Gastrocnemius medialis (tissue), 4 donors: ENCODE measurements at regions of chr19 and their contacts with region 1.

Region 1: DNA sequence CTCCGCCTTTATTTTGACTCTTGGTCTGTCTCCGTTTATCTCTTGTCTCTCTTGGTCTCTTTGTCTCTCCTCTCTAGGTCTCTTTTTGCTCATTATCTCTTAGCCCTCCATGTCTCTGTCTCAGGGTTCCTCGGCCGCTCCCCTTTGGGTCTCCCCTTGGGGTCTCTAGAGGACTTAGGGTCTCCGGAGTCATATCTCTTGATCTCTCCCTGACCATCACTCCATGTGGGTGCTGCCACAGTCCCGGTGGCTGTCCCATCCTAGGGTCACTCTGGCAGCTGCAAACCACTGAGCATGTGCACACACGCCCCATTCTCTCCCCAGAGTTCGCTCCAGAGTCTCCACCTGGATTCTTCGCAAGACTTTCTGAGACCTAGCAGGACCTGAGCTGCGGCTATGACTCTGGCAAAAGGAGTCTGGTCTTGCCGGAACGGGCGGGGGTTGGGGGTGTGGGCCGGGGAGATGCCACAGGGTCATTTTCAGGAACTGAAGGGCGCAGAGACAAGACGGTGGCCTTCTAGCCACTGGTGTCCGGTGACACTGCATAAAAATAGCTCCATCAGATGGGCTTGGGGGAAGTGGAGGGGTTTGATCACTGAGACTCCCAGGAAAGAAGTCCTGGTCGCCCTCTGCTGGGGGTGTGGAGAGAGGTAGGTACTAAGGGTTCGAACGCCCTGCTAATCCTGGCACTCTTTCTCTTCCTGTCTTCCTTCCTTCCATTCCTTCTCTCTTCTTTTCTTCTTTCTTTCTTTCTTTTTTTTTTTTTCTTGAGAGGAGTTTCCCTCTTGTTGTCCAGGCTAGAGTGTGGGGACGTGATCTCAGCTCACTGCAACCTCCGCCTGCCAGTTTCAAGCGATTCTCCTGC is 1.2 kb upstream of the KCNA7 start:
- DNase-seq: peak; percentile 47 to 86
- ATAC-seq: peak; percentile 72 to 80
- H3K4me3 ChIP-seq: peak overlapping the region; percentile 14 to 52 (median 48)
- H3K27ac ChIP-seq: peak overlapping the region; percentile 85 to 95 (median 92)
- H3K4me1 ChIP-seq: peaks cover 14 to 24% of the 10 kb centered on the region in 2 donors
- H3K27me3 ChIP-seq: no peaks in the 10 kb centered on the region
- CTCF ChIP-seq: peak; percentile 27 to 60 (median 55)
- POLR2A ChIP-seq: peak; percentile 46 to 49

Region 2: GRCh38 chr19:49056010-49056901 is 17.5 kb before region 1 on chr19:
- in situ Hi-C with region 1: no loop called
- intact Hi-C with region 1: loop called (anchors 1 kb)
- DNase-seq: peak in 1 of 2 donors; percentile 43
- ATAC-seq: peak; percentile 66 to 74
- H3K4me3 ChIP-seq: peak overlapping the region; percentile 49 to 77 (median 68)
- H3K27ac ChIP-seq: peak overlapping the region; percentile 64 to 74 (median 67)
- H3K4me1 ChIP-seq: peaks cover 6 to 23% of the 10 kb centered on the region in 2 donors
- H3K27me3 ChIP-seq: no peaks in the 10 kb centered on the region
- CTCF ChIP-seq: peak; percentile 13 to 70 (median 65)
- POLR2A ChIP-seq: peak in 1 of 2 donors; percentile 33

Region 3: GRCh38 chr19:49085020-49085867 is 11.5 kb after region 1 on chr19 and contains the start of gene SNRNP70:
- in situ Hi-C with region 1: no loop called
- intact Hi-C with region 1: loop called (anchors 1 kb)
- DNase-seq: peak; percentile 99
- ATAC-seq: peak; percentile 90 to 94
- H3K4me3 ChIP-seq: peak within 1 kb of the TSS; percentile 88 to 99 (median 92)
- H3K27ac ChIP-seq: peak within 1 kb of the TSS; percentile 90 to 98 (median 92)
- H3K4me1 ChIP-seq: peaks cover 18 to 26% of the 10 kb centered on the region in 2 donors
- H3K27me3 ChIP-seq: no peaks in the 10 kb centered on the region
- CTCF ChIP-seq: peak in 2 of 5 experiments; percentile 18 to 53
- POLR2A ChIP-seq: peak; percentile 86 to 92
- total RNA-seq, gene SNRNP70: 55.6 to 305 (median 107) TPM

Region 4: DNA sequence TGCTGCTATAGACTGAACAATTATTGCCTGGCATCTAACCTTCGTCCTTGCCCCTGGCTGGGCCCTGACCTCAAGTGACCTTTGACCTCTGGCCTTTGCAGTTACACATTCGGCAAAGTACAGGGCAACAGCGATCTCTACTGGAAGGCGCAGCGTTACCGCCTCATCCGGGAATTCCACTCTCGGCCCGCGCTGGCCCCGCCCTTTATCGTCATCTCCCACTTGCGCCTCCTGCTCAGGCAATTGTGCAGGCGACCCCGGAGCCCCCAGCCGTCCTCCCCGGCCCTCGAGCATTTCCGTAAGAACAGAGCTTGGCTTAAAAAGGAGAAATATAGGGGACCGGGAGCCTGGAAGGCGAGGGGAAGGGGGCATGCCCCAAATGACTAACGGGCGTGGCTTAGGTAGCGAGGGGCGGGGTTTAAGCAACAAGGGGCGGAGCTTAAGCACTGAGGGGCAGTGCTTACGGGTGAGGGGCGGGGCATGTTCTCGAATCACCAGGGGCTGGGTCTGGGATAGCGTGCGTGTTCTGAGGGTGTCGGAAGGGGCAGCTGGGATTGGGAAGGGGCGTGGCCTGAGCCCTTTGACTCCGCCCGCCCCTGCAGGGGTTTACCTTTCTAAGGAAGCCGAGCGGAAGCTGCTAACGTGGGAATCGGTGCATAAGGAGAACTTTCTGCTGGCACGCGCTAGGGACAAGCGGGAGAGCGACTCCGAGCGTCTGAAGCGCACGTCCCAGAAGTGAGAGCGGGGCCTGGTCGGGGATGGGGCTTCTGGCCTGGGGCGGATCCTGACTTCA is 136.6 kb after region 1 on chr19:
- in situ Hi-C with region 1: no loop called
- intact Hi-C with region 1: loop called (anchors 2 kb)
- DNase-seq: no peak
- ATAC-seq: no peak
- H3K4me3 ChIP-seq: no peak overlapping the region
- H3K27ac ChIP-seq: no peak overlapping the region
- H3K4me1 ChIP-seq: peaks cover 3 to 6% of the 10 kb centered on the region in 2 donors
- H3K27me3 ChIP-seq: no peaks in the 10 kb centered on the region
- CTCF ChIP-seq: no peak
- POLR2A ChIP-seq: no peak